HepG2 (cell line): ENCODE measurements at regions of chr3 and their contacts with region 1.

Region 1: DNA sequence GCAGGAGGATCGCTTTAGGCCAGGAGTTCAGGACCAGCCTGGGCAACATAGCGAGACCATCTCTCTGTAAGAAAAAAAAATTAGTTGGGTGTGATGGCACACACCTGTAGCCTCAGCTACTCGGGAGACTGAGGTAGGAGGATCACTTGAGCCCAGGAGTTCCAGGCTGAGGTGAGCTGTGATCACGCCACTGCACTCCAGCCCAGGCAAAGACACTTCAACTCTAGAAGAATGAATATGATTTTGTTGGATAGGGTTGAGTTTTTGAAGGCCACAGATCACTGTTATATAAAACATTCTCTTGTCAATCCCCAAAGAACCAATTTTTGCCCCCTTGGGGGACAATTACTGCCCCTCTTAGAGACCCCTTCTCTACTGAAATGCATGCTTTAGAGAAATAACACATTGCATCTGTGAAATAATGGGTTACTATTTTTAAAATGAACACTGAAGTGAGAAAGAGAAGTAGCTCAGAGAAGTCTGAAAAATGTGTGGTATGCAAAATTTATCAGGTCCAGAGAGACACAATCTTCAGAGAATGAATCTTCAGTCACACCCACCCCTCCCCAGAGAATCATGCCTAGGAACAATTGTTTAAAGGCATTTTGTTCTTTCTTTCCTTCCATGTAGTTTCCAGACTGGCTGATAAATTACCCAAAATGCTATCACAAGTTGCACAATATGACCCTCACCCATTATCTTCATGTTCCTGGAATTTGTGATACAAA is 42.7 kb downstream of the METTL6 start:
- DNase-seq: no peak
- ATAC-seq: no peak
- H3K4me3 ChIP-seq: no peak overlapping the region
- H3K27ac ChIP-seq: no peak overlapping the region
- H3K4me1 ChIP-seq: 0 out of 2 replicates have a peak, but pooled peaks cover 5% of the 10 kb centered on the region
- H3K27me3 ChIP-seq: no peaks in the 10 kb centered on the region
- CTCF ChIP-seq: no peak
- EP300 ChIP-seq: no peak
- POLR2A ChIP-seq: no peak
- RAD21 ChIP-seq: no peak

Region 2: DNA sequence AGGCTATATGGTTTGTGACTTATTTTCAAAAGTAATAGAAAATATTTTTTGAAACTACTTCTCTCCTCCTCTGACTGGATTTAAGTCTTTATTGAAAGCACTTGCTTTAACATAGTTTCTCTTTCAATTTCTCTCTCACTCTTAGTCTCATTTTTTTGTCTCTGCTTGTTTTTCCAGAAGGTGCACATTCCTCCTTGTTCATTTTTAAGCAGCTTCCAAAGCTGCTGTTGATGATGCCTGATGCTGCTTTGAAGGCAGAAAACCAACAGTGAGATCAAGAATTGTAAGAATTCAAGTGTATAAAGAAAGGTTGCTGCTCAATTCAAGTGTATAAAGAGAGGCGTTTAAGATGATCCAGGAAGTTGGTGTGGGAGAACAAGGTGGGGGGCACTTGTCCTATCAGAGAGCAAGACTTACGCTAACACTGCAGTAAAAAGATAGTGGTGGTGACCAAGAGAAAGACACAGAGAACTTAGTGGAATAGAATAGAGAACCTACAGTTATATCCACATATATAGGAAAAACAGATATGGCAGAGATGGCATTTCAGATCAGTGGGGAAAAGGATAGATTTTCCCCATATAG is 425.2 kb before region 1 on chr3:
- CTCF ChIA-PET with region 1: no interaction called
- POLR2A ChIA-PET with region 1: no interaction called
- in situ Hi-C with region 1: no loop called
- intact Hi-C with region 1: no loop called
- DNase-seq: no peak
- ATAC-seq: no peak
- H3K4me3 ChIP-seq: no peak overlapping the region
- H3K27ac ChIP-seq: no peak overlapping the region
- H3K4me1 ChIP-seq: peaks cover 12% of the 10 kb centered on the region; the same call in 1 of the 2 replicates
- H3K27me3 ChIP-seq: no peaks in the 10 kb centered on the region
- CTCF ChIP-seq: no peak
- EP300 ChIP-seq: no peak
- POLR2A ChIP-seq: no peak
- RAD21 ChIP-seq: no peak

Region 3: GRCh38 chr3:15113463-15113862 is 271.2 kb before region 1 on chr3:
- CTCF ChIA-PET with region 1: no interaction called
- POLR2A ChIA-PET with region 1: no interaction called
- in situ Hi-C with region 1: loop called (anchors 10 kb)
- intact Hi-C with region 1: no loop called
- DNase-seq: no peak
- ATAC-seq: no peak
- H3K4me3 ChIP-seq: no peak overlapping the region
- H3K27ac ChIP-seq: no peak overlapping the region
- H3K4me1 ChIP-seq: peaks cover 16% of the 10 kb centered on the region
- H3K27me3 ChIP-seq: peaks cover 0 to 2% of the 10 kb centered on the region in 2 experiments; a peak in 1 of 5 replicates
- CTCF ChIP-seq: no peak
- EP300 ChIP-seq: no peak
- POLR2A ChIP-seq: no peak
- RAD21 ChIP-seq: no peak

Region 4: GRCh38 chr3:15629860-15630597 is 245.4 kb after region 1 on chr3:
- CTCF ChIA-PET with region 1: no interaction called
- POLR2A ChIA-PET with region 1: no interaction called
- in situ Hi-C with region 1: no loop called
- intact Hi-C with region 1: no loop called
- DNase-seq: peak; percentile 62
- ATAC-seq: peak; percentile 98
- H3K4me3 ChIP-seq: no peak overlapping the region
- H3K27ac ChIP-seq: no peak overlapping the region
- H3K4me1 ChIP-seq: peaks cover 13% of the 10 kb centered on the region
- H3K27me3 ChIP-seq: no peaks in the 10 kb centered on the region
- CTCF ChIP-seq: peak; percentile 77
- EP300 ChIP-seq: no peak
- POLR2A ChIP-seq: no peak
- RAD21 ChIP-seq: peak; percentile 55

Region 5: GRCh38 chr3:15667484-15667883 is 282.8 kb after region 1 on chr3:
- CTCF ChIA-PET with region 1: no interaction called
- POLR2A ChIA-PET with region 1: no interaction called
- in situ Hi-C with region 1: no loop called
- intact Hi-C with region 1: no loop called
- DNase-seq: no peak
- ATAC-seq: no peak
- H3K4me3 ChIP-seq: no peak overlapping the region
- H3K27ac ChIP-seq: no peak overlapping the region
- H3K4me1 ChIP-seq: no peaks in the 10 kb centered on the region
- H3K27me3 ChIP-seq: no peaks in the 10 kb centered on the region
- CTCF ChIP-seq: no peak
- EP300 ChIP-seq: no peak
- POLR2A ChIP-seq: no peak
- RAD21 ChIP-seq: no peak